PC-9 (cell line): ENCODE measurements at regions of chr3 and their contacts with region 1.

Region 1: DNA sequence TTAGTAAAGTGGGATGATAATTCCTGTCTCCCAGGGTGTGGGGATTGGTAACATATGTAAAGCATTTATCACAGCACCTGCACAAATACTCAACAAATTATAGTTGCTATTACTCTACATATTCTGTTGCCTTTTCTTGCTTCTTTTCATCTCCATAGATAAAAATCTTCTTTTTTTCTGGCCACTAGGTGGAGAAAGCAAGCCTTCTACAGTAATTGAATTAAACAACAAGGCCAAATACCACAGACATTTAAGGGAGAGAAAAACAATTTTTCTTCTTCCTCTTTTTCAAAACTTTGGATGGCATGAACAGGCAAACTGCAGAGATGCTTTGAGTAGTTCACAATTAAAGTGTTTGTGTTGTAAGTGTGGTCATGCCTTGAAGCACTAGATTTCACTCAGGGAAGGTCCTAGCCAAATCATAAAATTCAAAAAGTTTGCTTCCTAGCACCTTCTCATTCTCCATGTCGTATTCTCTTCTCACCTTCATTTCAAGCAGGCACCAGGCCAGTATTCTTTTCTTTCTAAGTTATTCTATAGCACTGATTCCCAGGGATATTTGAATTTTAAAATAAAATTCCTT is 493.4 kb upstream of the TGFBR2 start:
- DNase-seq: no peak
- H3K4me3 ChIP-seq: no peak overlapping the region
- H3K27ac ChIP-seq: no peak overlapping the region
- H3K4me1 ChIP-seq: no peaks in the 10 kb centered on the region
- H3K27me3 ChIP-seq: no peaks in the 10 kb centered on the region
- CTCF ChIP-seq: peak; percentile 71

Region 2: DNA sequence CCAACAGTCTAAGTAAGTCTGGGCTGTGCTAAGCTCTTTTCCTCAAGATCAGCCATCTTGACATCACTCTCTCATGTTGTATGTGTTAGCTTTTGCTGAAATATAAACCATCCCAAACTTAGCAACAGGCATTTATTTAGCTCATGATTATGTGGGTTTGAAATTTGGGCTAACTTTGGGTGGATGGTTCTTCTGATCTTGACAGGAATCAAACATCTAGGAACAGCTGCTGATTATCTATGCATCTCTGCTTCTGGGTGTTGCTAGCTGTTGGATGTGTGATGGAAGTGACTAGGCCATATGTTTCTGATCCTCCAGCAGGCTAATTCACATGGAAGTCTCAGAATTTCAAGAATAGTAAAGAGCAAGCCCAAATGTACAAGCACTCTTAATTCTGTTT is 121.8 kb before region 1 on chr3:
- CTCF ChIA-PET with region 1: no interaction called
- POLR2A ChIA-PET with region 1: no interaction called
- intact Hi-C with region 1: no loop called
- DNase-seq: no peak
- H3K4me3 ChIP-seq: no peak overlapping the region
- H3K27ac ChIP-seq: no peak overlapping the region
- H3K4me1 ChIP-seq: no peaks in the 10 kb centered on the region
- H3K27me3 ChIP-seq: no peaks in the 10 kb centered on the region
- CTCF ChIP-seq: no peak

Region 3: GRCh38 chr3:30059240-30059639 is 53.8 kb before region 1 on chr3:
- CTCF ChIA-PET with region 1: no interaction called
- POLR2A ChIA-PET with region 1: no interaction called
- intact Hi-C with region 1: no loop called
- DNase-seq: no peak
- H3K4me3 ChIP-seq: no peak overlapping the region
- H3K27ac ChIP-seq: no peak overlapping the region
- H3K4me1 ChIP-seq: no peaks in the 10 kb centered on the region
- H3K27me3 ChIP-seq: no peaks in the 10 kb centered on the region
- CTCF ChIP-seq: no peak

Region 4: GRCh38 chr3:30747771-30748281 is 634.8 kb after region 1 on chr3:
- CTCF ChIA-PET with region 1: no interaction called
- POLR2A ChIA-PET with region 1: no interaction called
- intact Hi-C with region 1: loop called (anchors 2 kb)
- DNase-seq: peak in 1 of 2 experiments; percentile 57
- H3K4me3 ChIP-seq: no peak overlapping the region
- H3K27ac ChIP-seq: no peak overlapping the region
- H3K4me1 ChIP-seq: peaks cover 8% of the 10 kb centered on the region; the same call in 1 of the 2 replicates
- H3K27me3 ChIP-seq: no peaks in the 10 kb centered on the region
- CTCF ChIP-seq: peak; percentile 32; the same call in 1 of the 2 replicates